Activated naive CD4-positive, alpha-beta T cell treated with anti-CD3 and anti-CD28 coated beads for 36 hours (primary cell): ENCODE measurements at regions of chr1 and their contacts with region 1.

Region 1: GRCh38 chr1:26003262-26003661 is 5.4 kb upstream of the PAFAH2 start:
- DNase-seq: no peak
- H3K4me3 Mint-ChIP-seq: no peak overlapping the region
- H3K27ac Mint-ChIP-seq: no peak overlapping the region
- H3K4me1 Mint-ChIP-seq: peaks cover 6% of the 10 kb centered on the region
- H3K27me3 Mint-ChIP-seq: no peaks in the 10 kb centered on the region

Region 2: GRCh38 chr1:25922056-25922969 is 80.9 kb before region 1 on chr1:
- CTCF ChIA-PET with region 1: interaction called, 11 read pairs
- intact Hi-C with region 1: no loop called
- DNase-seq: peak; percentile 60
- H3K4me3 Mint-ChIP-seq: peak overlapping the region; percentile 70
- H3K27ac Mint-ChIP-seq: no peak overlapping the region
- H3K4me1 Mint-ChIP-seq: peaks cover 27% of the 10 kb centered on the region
- H3K27me3 Mint-ChIP-seq: peaks cover 2% of the 10 kb centered on the region

Region 3: DNA sequence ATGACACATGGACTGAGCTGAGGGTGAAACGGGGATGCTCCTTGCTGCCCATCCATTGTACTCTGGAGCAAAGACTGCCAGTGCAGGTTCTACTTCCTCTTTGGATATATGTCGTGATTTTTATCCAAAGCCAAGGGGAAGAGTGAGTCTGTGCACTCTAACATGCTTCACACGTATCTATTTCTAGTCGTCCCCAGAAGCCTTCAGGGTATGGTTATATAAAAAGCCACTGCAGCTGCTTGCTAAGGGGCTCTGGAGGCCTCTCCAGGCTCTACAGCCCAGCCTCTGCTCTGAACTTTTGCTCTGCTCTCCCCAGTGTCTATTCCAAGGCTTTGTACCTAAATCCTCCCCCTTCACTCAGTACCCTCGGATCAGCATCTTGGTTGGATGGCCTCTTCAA is 25.5 kb before region 1 on chr1:
- CTCF ChIA-PET with region 1: no interaction called
- intact Hi-C with region 1: no loop called
- DNase-seq: no peak
- H3K4me3 Mint-ChIP-seq: no peak overlapping the region
- H3K27ac Mint-ChIP-seq: peak overlapping the region; percentile 26
- H3K4me1 Mint-ChIP-seq: peaks cover under 1% of the 10 kb centered on the region
- H3K27me3 Mint-ChIP-seq: no peaks in the 10 kb centered on the region

Region 4: DNA sequence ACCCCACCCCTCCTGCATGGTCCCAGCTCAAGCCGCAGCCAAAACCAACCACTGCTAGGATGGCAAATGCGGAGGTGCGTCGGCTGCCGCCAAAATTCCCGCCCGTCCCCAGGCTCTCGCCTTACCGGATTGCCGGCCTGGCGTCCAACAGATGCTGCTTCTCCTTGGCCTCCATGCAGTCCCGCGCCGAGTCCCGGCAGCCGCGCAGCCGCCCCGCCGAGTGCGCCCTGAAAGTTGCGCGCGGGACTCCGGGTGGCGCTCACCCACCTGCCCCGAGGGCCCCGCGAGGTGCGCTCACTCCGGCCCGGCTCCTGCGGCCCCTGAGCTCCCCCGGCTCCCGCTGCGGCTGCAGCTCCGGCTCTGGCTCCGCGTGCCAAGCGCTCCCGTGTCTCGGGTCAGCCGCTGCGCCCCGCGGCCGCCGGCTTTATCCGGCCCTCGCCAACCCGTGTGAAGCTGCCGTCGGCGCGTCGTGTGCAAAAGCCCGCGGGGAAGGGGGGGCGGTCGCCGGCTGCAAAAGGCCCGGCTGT is 42.5 kb after region 1 on chr1 and contains the start of gene SLC30A2:
- CTCF ChIA-PET with region 1: no interaction called
- intact Hi-C with region 1: no loop called
- DNase-seq: no peak
- H3K4me3 Mint-ChIP-seq: no peak within 1 kb of the TSS
- H3K27ac Mint-ChIP-seq: peak within 1 kb of the TSS; percentile 50
- H3K4me1 Mint-ChIP-seq: peaks cover 6% of the 10 kb centered on the region
- H3K27me3 Mint-ChIP-seq: peaks cover 50% of the 10 kb centered on the region
- total RNA-seq, gene SLC30A2: not detected

Region 5: GRCh38 chr1:26161415-26162219 is 158.4 kb after region 1 on chr1:
- CTCF ChIA-PET with region 1: no interaction called
- intact Hi-C with region 1: no loop called
- DNase-seq: peak; percentile 48
- H3K4me3 Mint-ChIP-seq: peak overlapping the region; percentile 50
- H3K27ac Mint-ChIP-seq: no peak overlapping the region
- H3K4me1 Mint-ChIP-seq: peaks cover 16% of the 10 kb centered on the region
- H3K27me3 Mint-ChIP-seq: peaks cover 27% of the 10 kb centered on the region